Activated CD4-positive, alpha-beta T cell treated with anti-CD3 and anti-CD28 coated beads, Interleukin-2, amount 10 ng/mL, durations not matched to agents 24 days and 14 days (primary cell): ENCODE measurements at regions of chr10 and their contacts with region 1.

Region 1: GRCh38 chr10:6465854-6466601 is 114.0 kb downstream of the PRKCQ start:
- DNase-seq: no peak
- H3K4me3 Mint-ChIP-seq: peak overlapping the region; percentile 31
- H3K27ac Mint-ChIP-seq: peak overlapping the region; percentile 54
- H3K4me1 Mint-ChIP-seq: peaks cover 25% of the 10 kb centered on the region
- H3K27me3 Mint-ChIP-seq: no peaks in the 10 kb centered on the region

Region 2: DNA sequence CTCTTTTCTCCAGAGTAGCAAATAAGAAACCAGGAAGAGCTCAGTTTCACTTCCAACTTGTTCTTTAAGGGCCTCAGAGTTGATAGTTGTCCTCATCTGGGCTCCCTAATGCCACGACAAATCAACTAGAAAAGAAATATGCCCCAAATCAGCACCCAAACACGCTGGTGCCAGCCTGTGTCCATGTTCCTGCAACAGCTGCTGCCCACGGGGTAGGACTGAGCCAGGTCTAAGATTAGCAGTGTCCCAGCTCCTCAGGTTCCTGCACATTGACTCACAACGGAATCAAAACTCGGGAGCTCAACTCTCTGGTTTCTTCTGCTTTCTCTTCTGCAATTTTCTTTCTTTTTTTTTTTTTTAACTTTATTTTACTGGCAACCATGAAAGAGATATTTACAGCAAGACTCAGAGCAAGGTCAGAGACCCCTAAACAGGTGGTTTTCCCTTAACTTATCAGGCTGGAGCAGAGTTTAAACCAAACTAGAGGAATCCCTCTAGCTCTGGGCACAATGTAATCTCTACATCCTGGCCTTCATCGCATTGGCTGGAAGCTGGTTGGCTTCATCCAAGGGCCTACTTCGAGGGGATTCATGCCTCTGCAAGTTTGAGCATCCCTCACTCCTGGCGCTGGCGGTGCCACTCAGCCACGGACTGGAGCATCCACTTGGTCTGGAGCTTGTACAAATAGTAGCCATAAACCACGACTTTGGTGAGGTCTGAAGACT is 137.2 kb before region 1 on chr10:
- intact Hi-C with region 1: no loop called
- DNase-seq: no peak
- H3K4me3 Mint-ChIP-seq: no peak overlapping the region
- H3K27ac Mint-ChIP-seq: no peak overlapping the region
- H3K4me1 Mint-ChIP-seq: peaks cover 4% of the 10 kb centered on the region
- H3K27me3 Mint-ChIP-seq: no peaks in the 10 kb centered on the region

Region 3: DNA sequence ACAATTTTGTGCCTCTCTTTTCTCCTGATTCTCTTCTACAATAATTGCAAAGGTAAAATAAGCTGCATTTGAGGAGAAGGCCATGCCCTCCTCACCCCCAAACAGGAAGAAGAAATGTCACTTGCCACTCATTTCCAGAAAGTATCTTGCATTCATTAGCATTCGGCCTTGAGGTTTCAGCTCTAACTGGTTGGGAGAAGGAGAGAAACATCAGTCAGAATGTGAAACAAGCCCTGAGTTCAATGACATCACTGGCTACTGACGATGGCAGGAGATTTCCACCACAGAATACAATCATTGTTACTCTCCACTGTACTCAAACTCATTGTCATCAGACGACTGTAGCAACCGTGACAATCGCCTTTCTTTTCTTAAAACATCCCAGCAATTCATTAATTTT is 41.3 kb after region 1 on chr10:
- intact Hi-C with region 1: loop called (anchors 1 kb)
- DNase-seq: peak; percentile 84
- H3K4me3 Mint-ChIP-seq: peak overlapping the region; percentile 64
- H3K27ac Mint-ChIP-seq: peak overlapping the region; percentile 86
- H3K4me1 Mint-ChIP-seq: peaks cover 52% of the 10 kb centered on the region
- H3K27me3 Mint-ChIP-seq: no peaks in the 10 kb centered on the region